BJ (cell line): ENCODE measurements at regions of chr6 and their contacts with region 1.

Region 1: DNA sequence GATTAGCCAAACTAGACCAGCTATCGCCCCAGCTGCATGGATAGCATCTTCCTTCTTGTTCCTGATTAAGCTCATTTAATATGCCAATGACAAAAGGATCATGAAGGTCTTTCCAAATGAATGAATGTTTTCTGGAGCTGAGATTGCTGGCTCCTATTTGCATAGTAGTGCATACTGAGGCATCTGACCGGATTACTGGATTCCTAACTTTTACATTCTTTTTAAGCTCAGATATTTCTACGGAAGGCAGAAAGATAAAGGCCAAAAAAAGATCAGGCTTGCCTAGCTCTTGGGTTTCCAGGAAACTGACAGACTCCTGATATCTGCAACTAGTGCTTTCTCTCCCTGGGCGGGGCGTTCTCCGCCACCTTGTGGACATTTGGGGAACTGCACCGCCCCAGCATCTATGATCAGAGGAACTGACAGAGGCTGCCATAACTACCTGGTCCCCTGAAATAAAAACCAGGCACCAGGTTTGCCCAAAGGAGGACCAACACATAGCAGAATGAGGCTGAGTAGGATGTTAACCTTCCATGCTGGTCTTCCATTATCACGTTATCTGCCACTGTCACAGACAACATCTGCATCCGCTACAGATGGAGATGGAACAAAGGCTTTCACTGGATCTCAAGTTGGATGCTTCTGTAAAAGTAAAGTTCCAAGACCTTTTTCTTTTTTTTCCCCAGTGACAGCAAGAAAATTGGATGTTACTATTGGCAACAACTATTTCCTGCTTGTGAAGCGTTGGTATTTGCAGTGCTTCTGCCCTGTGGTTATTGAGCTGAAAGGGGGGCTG is 33.2 kb downstream of the NT5E start:
- DNase-seq: no peak
- H3K4me3 ChIP-seq: no peak overlapping the region
- H3K27me3 ChIP-seq: no peaks in the 10 kb centered on the region
- CTCF ChIP-seq: peak; percentile 99

Region 2: DNA sequence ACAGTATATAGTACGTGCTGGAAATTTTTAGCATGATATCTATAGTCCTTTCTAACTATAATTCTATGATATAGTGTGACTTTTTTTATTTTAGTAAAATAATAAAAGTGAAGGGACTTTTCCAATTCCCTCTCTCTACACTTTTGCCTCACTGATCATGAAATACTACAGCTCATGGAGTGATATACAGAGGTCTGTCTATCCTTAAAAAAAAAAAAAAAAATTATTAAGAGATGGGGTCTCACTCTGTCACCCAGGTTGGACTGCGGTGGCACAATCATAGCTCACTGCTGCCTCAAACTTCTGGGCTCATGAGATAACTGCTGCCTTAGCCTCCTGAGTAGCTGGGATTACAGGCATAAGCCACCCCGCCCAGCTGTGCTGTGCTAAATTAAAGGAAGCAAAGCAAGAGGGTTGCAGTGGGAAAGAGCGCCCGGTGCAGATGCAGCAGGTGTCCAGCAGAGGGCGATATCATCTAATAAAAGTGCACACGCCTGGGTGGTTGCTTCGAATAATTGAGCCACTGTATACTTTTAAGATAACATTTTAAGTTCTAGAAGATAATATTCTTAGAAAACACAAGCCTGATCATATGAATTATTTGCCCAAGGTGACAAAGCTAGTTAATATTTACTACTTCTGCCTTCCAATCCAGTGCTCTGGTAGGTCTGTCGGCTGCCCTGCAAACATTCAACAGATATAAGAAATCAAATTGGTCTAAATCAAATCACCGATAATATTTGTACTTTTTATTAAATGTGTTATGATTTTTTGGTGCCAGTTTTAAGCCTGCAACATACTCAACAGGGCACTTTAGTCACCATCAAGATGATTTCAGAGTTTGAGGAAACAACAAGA is 128.1 kb before region 1 on chr6:
- CTCF ChIA-PET with region 1: interaction called, 81 read pairs
- POLR2A ChIA-PET with region 1: interaction called, 3 read pairs
- DNase-seq: no peak
- H3K4me3 ChIP-seq: no peak overlapping the region
- H3K27me3 ChIP-seq: no peaks in the 10 kb centered on the region
- CTCF ChIP-seq: peak; percentile 89

Region 3: GRCh38 chr6:85404502-85405174 is 78.5 kb before region 1 on chr6:
- CTCF ChIA-PET with region 1: interaction called, 16 read pairs
- POLR2A ChIA-PET with region 1: no interaction called
- DNase-seq: peak; percentile 74
- H3K4me3 ChIP-seq: no peak overlapping the region
- H3K27me3 ChIP-seq: no peaks in the 10 kb centered on the region
- CTCF ChIP-seq: no peak

Region 4: GRCh38 chr6:85460921-85461797 is 21.9 kb before region 1 on chr6:
- CTCF ChIA-PET with region 1: interaction called, 20 read pairs
- POLR2A ChIA-PET with region 1: no interaction called
- DNase-seq: no peak
- H3K4me3 ChIP-seq: no peak overlapping the region
- H3K27me3 ChIP-seq: no peaks in the 10 kb centered on the region
- CTCF ChIP-seq: no peak

Region 5: GRCh38 chr6:85498596-85499258 is 15.6 kb after region 1 on chr6:
- CTCF ChIA-PET with region 1: interaction called, 59 read pairs
- POLR2A ChIA-PET with region 1: no interaction called
- DNase-seq: no peak
- H3K4me3 ChIP-seq: no peak overlapping the region
- H3K27me3 ChIP-seq: no peaks in the 10 kb centered on the region
- CTCF ChIP-seq: no peak

Region 6: DNA sequence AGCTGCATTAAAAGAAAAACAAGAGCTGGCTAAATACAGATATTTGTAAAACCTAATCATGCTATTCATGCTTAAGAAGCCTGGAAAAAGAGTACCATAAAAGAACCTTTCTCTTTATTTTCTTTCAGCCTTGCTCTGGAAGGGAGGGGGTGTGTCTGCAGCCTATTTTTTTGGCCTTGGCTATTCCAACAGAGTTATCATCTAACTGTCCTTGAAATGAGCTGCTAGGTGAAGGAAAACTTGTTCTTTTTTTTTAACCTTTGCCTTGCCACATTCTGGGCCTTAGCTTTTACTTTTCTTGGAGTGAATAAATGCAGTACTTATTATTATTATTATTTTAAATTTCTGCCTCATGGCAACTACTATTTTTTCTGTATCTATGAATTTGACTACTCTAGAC is 384.5 kb after region 1 on chr6:
- CTCF ChIA-PET with region 1: no interaction called
- POLR2A ChIA-PET with region 1: no interaction called
- DNase-seq: no peak
- H3K4me3 ChIP-seq: no peak overlapping the region
- H3K27me3 ChIP-seq: no peaks in the 10 kb centered on the region
- CTCF ChIP-seq: no peak